ENCODE measurements at regions of chr2 and their contacts with region 1.

Region 1: GRCh38 chr2:33051586-33052360 is 105.0 kb downstream of the LTBP1 start:
- DNase-seq: no peak
- ATAC-seq: no peak
- H3K4me3 ChIP-seq: no peak overlapping the region
- H3K4me3 Mint-ChIP-seq: no peak overlapping the region
- H3K27ac ChIP-seq: no peak overlapping the region
- H3K27ac Mint-ChIP-seq: no peak overlapping the region
- H3K4me1 ChIP-seq: no peaks in the 10 kb centered on the region
- H3K4me1 Mint-ChIP-seq: no peaks in the 10 kb centered on the region
- H3K27me3 ChIP-seq: peaks cover 0 to 2% of the 10 kb centered on the region in 2 experiments
- H3K27me3 Mint-ChIP-seq: peaks cover 4 to 15% of the 10 kb centered on the region in 2 donors

Region 2: GRCh38 chr2:33034751-33035150 is 17.0 kb before region 1 on chr2:
- CTCF ChIA-PET with region 1: no interaction called
- POLR2A ChIA-PET with region 1: no interaction called
- DNase-seq: no peak
- ATAC-seq: no peak
- H3K4me3 ChIP-seq: no peak overlapping the region
- H3K4me3 Mint-ChIP-seq: no peak overlapping the region
- H3K27ac ChIP-seq: no peak overlapping the region
- H3K27ac Mint-ChIP-seq: no peak overlapping the region
- H3K4me1 ChIP-seq: no peaks in the 10 kb centered on the region
- H3K4me1 Mint-ChIP-seq: no peaks in the 10 kb centered on the region
- H3K27me3 ChIP-seq: peaks cover 0 to 7% of the 10 kb centered on the region in 2 experiments
- H3K27me3 Mint-ChIP-seq: peaks cover 4 to 10% of the 10 kb centered on the region in 2 donors

Region 3: DNA sequence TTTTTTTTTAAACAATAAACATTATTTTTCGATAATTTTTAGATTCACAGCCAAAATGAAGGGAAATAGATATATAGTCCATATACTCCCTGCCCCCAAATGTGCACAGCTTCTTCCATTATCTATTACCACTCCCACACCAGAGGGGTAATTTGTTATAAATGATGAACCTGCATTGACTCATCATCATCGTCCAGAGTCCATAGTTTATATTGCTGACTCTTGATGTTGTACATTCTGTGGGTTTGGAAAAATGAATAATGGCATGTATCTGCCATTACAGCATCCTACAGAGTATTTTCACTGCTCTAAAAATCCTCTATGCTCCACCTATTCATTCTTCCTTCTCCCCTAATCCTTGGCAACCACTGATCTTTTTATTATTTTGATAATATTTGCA is 16.5 kb after region 1 on chr2:
- CTCF ChIA-PET with region 1: no interaction called
- POLR2A ChIA-PET with region 1: interaction called in 1 of 2 experiments, 11 read pairs
- DNase-seq: no peak
- ATAC-seq: no peak
- H3K4me3 ChIP-seq: no peak overlapping the region
- H3K4me3 Mint-ChIP-seq: no peak overlapping the region
- H3K27ac ChIP-seq: no peak overlapping the region
- H3K27ac Mint-ChIP-seq: no peak overlapping the region
- H3K4me1 ChIP-seq: no peaks in the 10 kb centered on the region
- H3K4me1 Mint-ChIP-seq: no peaks in the 10 kb centered on the region
- H3K27me3 ChIP-seq: peaks cover 0 to 7% of the 10 kb centered on the region in 2 experiments
- H3K27me3 Mint-ChIP-seq: peaks cover 6 to 9% of the 10 kb centered on the region in 2 donors